ENCODE measurements at regions of chr3 and their contacts with region 1.

Region 1: DNA sequence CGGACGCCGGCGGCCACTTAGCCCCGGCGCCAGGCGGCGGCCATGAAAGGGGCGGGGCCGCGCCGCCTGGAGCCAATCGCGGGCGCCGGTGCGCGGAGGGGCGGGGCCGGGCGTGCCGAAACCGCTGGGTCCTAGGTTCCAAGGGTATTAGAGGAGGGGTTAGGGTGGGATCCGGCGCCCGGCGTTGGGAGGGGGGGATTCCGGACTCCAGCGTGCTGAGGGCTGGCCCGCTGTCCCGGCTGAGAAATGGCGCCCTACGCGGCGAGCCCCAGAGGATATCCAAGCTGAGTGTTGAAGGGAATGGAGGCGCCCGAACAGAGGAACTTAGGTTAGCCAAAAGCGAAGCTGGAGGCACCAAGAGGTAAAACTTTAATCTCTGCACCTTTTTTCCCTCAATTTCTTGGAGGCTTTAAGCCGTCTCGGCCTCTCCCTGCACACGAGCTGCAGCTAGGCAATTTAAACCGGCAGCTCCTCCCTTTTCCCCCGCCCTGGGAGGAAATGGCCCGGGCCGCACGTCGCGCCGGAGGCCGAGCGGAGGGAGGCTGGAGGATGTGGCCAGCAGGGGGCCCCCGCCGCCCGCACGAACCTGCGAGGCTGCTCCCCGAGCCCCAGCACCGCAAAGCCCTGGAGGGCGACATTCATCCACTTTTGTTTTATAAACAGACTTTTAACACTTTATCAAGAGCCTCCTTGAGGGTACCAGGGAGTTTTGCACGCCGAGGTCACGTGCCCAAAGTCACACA is at the start of gene XXYLT1:
- DNase-seq: peak; percentile 90 to 92
- ATAC-seq: peak; percentile 85 to 96 (median 87)
- H3K4me3 ChIP-seq: peak within 1 kb of the TSS; percentile 92
- H3K4me3 Mint-ChIP-seq: peak within 1 kb of the TSS; percentile 90
- H3K27ac ChIP-seq: peak within 1 kb of the TSS; percentile 53
- H3K27ac Mint-ChIP-seq: peak within 1 kb of the TSS; percentile 73 to 84
- H3K4me1 ChIP-seq: peaks cover 23% of the 10 kb centered on the region
- H3K4me1 Mint-ChIP-seq: peaks cover 24 to 25% of the 10 kb centered on the region in 2 donors
- H3K27me3 ChIP-seq: no peaks in the 10 kb centered on the region
- H3K27me3 Mint-ChIP-seq: no peaks in the 10 kb centered on the region
- CTCF ChIP-seq: peak; percentile 77
- total RNA-seq, gene XXYLT1: 8.7 to 13.6 (median 10.2) TPM

Region 2: DNA sequence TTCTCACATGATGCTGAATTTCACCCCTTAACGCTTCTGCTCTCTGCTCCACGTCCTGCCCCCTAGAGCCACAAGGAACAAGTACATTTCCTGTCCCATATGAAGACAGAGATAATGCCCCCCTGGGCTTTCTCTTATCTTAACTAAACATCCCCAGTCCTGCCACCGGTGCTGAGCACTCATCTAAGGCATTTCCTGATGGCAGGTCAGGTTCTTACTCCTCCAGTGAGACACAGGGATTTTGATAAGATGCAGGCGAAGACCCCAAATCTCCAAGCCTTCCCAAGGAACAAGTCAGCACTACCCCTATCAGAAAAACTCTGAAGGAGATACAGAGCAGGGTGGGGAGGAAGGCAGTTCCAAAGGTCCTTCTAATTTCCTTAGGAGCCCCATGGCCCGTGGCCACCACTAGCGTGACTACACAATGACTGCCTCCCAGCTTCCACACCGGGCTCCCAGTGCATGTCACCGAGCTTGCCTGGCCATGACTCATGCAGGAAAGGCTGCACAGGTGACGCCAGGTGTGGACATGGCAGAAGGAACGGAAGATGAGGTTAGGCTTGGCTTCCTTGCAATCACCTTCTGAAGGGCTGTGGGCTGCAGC is 153.2 kb before region 1 on chr3:
- intact Hi-C with region 1: no loop called
- DNase-seq: no peak
- ATAC-seq: no peak
- H3K4me3 ChIP-seq: no peak overlapping the region
- H3K4me3 Mint-ChIP-seq: no peak overlapping the region
- H3K27ac ChIP-seq: no peak overlapping the region
- H3K27ac Mint-ChIP-seq: no peak overlapping the region
- H3K4me1 ChIP-seq: no peaks in the 10 kb centered on the region
- H3K4me1 Mint-ChIP-seq: peaks cover 13 to 15% of the 10 kb centered on the region in 2 donors
- H3K27me3 ChIP-seq: no peaks in the 10 kb centered on the region
- H3K27me3 Mint-ChIP-seq: no peaks in the 10 kb centered on the region
- CTCF ChIP-seq: no peak

Region 3: GRCh38 chr3:195442573-195443390 is 171.5 kb after region 1 on chr3 and contains the start of gene ACAP2:
- intact Hi-C with region 1: loop called (anchors 1 kb)
- DNase-seq: peak; percentile 99
- ATAC-seq: peak; percentile 88 to 96 (median 91)
- H3K4me3 ChIP-seq: peak within 1 kb of the TSS; percentile 92
- H3K4me3 Mint-ChIP-seq: peak within 1 kb of the TSS; percentile 97
- H3K27ac ChIP-seq: peak within 1 kb of the TSS; percentile 89
- H3K27ac Mint-ChIP-seq: peak within 1 kb of the TSS; percentile 92 to 97
- H3K4me1 ChIP-seq: peaks cover 17% of the 10 kb centered on the region
- H3K4me1 Mint-ChIP-seq: peaks cover 37 to 41% of the 10 kb centered on the region in 2 donors
- H3K27me3 ChIP-seq: no peaks in the 10 kb centered on the region
- H3K27me3 Mint-ChIP-seq: no peaks in the 10 kb centered on the region
- CTCF ChIP-seq: no peak
- total RNA-seq, gene ACAP2: 103 to 132 (median 128) TPM

Region 4: GRCh38 chr3:195522254-195523023 is 251.2 kb after region 1 on chr3:
- intact Hi-C with region 1: loop called (anchors 1 kb)
- DNase-seq: peak in 1 of 2 donors; percentile 72
- ATAC-seq: peak in 2 of 3 donors; percentile 33 to 59
- H3K4me3 ChIP-seq: no peak overlapping the region
- H3K4me3 Mint-ChIP-seq: no peak overlapping the region
- H3K27ac ChIP-seq: no peak overlapping the region
- H3K27ac Mint-ChIP-seq: peak overlapping the region; percentile 29 to 67
- H3K4me1 ChIP-seq: no peaks in the 10 kb centered on the region
- H3K4me1 Mint-ChIP-seq: peaks cover 9 to 17% of the 10 kb centered on the region in 2 donors
- H3K27me3 ChIP-seq: no peaks in the 10 kb centered on the region
- H3K27me3 Mint-ChIP-seq: no peaks in the 10 kb centered on the region
- CTCF ChIP-seq: peak; percentile 95

Region 5: DNA sequence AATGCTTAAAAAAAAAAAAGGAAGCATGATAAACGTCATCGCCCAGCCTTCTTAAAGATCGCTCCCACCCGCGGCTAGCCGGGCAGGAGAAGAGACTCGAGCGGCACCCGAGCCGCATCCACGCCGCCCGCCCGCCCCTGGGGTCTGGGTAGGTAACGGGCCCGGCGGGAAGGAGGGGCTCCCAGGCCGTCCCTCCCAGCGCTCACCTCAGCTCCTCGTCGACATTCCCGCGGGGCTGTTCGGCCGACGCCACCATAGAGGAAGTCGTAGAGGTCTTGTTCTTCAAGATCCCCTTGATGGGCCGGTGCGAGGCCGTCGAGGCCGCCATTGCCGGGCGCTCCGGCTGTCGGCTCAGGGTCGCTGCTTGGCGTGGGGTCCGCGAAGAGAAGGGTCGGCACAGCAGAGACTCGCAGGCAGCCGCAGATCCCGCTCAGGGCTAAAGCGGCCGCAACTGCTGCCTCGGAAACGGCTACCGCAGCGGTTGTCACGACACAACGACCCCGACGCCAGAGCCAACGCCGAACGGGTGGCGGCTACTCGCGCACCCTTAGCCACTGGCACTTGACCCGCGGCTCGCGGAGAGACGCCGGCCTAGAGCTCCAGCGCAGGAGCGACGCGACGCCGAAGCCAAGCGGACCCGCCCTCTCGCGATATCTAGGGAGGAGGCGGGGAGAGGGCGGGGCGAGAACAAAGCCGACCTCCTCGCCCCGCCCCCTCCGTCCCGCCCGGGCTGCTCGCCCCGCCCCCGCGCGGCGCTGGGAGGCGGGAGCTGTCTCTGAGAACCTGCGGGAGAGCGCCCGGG is 271.6 kb after region 1 on chr3 and contains the start of gene PPP1R2:
- intact Hi-C with region 1: loop called (anchors 1 kb)
- DNase-seq: peak; percentile 94 to 97
- ATAC-seq: peak; percentile 91 to 97 (median 92)
- H3K4me3 ChIP-seq: peak within 1 kb of the TSS; percentile 86
- H3K4me3 Mint-ChIP-seq: peak within 1 kb of the TSS; percentile 89
- H3K27ac ChIP-seq: peak within 1 kb of the TSS; percentile 95
- H3K27ac Mint-ChIP-seq: peak within 1 kb of the TSS; percentile 94 to 95
- H3K4me1 ChIP-seq: peaks cover 55% of the 10 kb centered on the region
- H3K4me1 Mint-ChIP-seq: peaks cover 80 to 84% of the 10 kb centered on the region in 2 donors
- H3K27me3 ChIP-seq: no peaks in the 10 kb centered on the region
- H3K27me3 Mint-ChIP-seq: no peaks in the 10 kb centered on the region
- CTCF ChIP-seq: no peak
- total RNA-seq, gene PPP1R2: 89.8 to 97.3 (median 89.9) TPM

Measured in natural killer cell (primary cell).